Gastrocnemius medialis (tissue), 4 donors: ENCODE measurements at regions of chr11 and their contacts with region 1.

Region 1: DNA sequence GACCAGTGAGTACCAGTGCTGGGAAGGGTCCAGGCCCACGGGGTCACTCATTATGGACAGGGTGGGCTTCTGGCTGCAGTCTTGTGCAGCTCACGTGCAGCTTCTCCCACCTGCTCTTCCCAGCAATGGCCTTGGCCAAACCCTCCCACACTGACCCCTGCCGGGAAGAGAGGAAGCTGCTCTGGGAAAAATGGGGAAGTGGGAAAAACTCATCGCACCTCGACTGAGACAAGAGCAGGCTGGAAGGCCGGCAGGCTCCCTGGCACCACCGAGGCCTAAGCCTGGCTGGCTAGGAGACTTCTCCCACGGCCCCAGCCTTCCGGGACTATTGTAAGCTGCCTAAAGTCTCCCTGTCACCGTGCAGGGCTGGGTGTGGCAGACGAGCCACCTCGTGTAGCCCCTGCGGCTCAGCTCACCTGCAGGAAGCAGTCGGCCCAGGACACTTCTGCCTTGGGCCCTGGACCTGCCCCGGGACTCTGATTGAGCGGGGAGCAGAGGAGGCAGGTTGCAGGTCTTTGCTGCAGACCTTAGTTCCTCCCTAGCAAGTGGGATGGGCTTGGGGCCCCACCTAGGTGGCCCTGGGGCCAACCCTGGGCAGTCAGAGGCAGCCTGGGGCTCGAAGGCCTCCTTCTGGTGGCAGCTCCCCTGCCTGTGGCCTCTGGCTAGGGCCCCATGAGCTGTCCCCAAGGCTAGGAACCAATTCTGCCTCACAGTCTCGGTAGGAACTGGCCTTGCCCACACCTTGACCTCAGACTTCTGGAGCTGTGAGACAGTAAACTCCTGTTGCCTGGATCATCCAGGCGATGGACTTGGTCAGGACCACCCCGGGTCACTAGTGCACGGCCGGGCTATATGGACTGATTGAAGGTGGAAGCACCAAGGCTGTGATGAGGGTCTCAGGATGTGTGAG is 23.1 kb downstream of the MRGPRG start:
- DNase-seq: no peak
- ATAC-seq: peak in 1 of 2 donors; percentile 45
- H3K4me3 ChIP-seq: no peak overlapping the region
- H3K27ac ChIP-seq: no peak overlapping the region
- H3K4me1 ChIP-seq: no peaks in the 10 kb centered on the region
- H3K27me3 ChIP-seq: peaks cover 0 to 6% (median under 1%) of the 10 kb centered on the region in 3 donors
- CTCF ChIP-seq: peak in 2 of 5 experiments; percentile 29 to 44
- POLR2A ChIP-seq: no peak

Region 2: GRCh38 chr11:2825889-2826678 is 369.4 kb before region 1 on chr11:
- in situ Hi-C with region 1: no loop called
- intact Hi-C with region 1: no loop called
- DNase-seq: peak; percentile 66 to 82
- ATAC-seq: peak; percentile 81 to 84
- H3K4me3 ChIP-seq: peak overlapping the region; percentile 18 to 40 (median 30)
- H3K27ac ChIP-seq: peak overlapping the region; percentile 66 to 81 (median 74)
- H3K4me1 ChIP-seq: peaks cover 28 to 34% of the 10 kb centered on the region in 2 donors
- H3K27me3 ChIP-seq: peaks cover 0 to 6% (median 2%) of the 10 kb centered on the region in 3 donors
- CTCF ChIP-seq: no peak
- POLR2A ChIP-seq: no peak

Region 3: DNA sequence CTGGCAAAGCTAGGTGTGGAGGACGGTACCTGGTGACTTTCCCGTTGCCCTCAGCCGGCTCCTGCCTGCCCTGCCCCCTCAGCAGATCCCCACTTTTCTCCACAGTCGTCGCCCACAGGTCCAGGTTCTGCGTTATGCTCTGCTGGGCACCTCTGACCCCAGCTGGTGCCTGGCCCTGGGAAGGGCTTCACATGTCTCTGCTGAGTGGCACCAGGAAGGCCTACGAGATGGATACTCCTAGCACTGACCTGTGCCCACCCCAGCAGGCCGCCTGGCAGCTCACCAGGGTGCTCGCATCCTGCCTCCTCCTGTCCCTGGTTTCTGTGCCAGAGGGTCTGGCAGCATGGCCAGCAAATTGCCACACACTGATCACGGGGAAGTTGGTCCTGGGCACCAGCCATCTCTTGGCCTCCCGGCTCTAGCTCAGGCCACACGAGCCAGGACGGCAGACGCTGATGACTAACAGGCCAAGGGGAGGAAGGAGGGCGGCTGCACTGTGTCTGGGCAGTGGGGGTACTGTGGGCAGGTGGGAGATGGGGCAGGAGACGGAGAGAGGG is 152.1 kb before region 1 on chr11:
- in situ Hi-C with region 1: no loop called
- intact Hi-C with region 1: no loop called
- DNase-seq: peak; percentile 91 to 99
- ATAC-seq: peak; percentile 63 to 65
- H3K4me3 ChIP-seq: peak overlapping the region in 2 of 4 donors; percentile 25 to 33
- H3K27ac ChIP-seq: peak overlapping the region; percentile 92 to 99 (median 98)
- H3K4me1 ChIP-seq: peaks cover 49 to 60% of the 10 kb centered on the region in 2 donors
- H3K27me3 ChIP-seq: no peaks in the 10 kb centered on the region
- CTCF ChIP-seq: no peak
- POLR2A ChIP-seq: peak in 1 of 2 donors; percentile 4

Region 4: DNA sequence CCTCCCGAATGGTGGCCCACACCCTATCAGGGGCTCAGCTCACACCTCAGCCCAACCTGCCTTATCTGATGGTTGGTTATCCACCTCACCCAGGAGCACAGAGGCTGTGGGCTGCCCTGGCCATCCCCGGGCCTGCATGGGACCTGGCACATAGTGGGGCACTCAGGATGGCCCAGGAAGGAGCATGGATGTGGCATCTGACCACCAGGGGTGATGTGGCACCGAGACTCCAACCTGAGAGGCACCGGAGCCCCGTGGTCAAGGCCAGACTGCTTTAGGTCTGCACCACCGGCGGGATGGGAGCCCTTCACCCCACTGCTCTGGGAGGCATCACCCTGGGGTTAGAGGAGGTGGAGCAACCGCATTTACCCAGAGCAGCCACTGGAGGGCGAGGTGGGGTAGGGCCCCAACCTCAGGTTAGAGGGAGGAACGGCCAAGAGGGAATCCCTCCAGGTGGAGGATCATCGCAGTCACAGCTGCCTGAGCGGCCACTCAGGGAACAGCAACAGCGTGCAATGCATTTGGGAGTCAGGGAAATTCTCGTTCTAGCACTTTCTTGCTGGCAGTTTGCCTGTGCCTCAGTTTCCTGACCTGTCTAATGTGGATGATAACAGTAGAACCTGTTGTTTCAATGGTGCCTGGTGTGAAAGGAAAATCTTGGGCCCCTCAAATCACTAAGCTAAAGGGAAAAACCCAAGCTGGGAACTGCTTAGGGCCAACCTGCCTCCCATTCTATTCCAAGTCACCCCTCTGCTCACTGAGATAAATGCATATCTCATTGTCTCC is 85.4 kb before region 1 on chr11:
- in situ Hi-C with region 1: loop called in 1 of 4 experiments (anchors 10 kb)
- intact Hi-C with region 1: no loop called
- DNase-seq: peak; percentile 39 to 67
- ATAC-seq: peak; percentile 94 to 96
- H3K4me3 ChIP-seq: no peak overlapping the region
- H3K27ac ChIP-seq: no peak overlapping the region
- H3K4me1 ChIP-seq: no peaks in the 10 kb centered on the region
- H3K27me3 ChIP-seq: no peaks in the 10 kb centered on the region
- CTCF ChIP-seq: peak; percentile 72 to 88 (median 82)
- POLR2A ChIP-seq: no peak

Region 5: GRCh38 chr11:3135481-3136440 is 59.7 kb before region 1 on chr11:
- in situ Hi-C with region 1: no loop called
- intact Hi-C with region 1: no loop called
- DNase-seq: peak in 1 of 2 donors; percentile 11
- ATAC-seq: no peak
- H3K4me3 ChIP-seq: no peak overlapping the region
- H3K27ac ChIP-seq: no peak overlapping the region
- H3K4me1 ChIP-seq: peaks cover 0 to 9% of the 10 kb centered on the region in 2 donors
- H3K27me3 ChIP-seq: no peaks in the 10 kb centered on the region
- CTCF ChIP-seq: no peak
- POLR2A ChIP-seq: no peak